H1 (cell line): ENCODE measurements at regions of chr14 and their contacts with region 1.

Region 1: DNA sequence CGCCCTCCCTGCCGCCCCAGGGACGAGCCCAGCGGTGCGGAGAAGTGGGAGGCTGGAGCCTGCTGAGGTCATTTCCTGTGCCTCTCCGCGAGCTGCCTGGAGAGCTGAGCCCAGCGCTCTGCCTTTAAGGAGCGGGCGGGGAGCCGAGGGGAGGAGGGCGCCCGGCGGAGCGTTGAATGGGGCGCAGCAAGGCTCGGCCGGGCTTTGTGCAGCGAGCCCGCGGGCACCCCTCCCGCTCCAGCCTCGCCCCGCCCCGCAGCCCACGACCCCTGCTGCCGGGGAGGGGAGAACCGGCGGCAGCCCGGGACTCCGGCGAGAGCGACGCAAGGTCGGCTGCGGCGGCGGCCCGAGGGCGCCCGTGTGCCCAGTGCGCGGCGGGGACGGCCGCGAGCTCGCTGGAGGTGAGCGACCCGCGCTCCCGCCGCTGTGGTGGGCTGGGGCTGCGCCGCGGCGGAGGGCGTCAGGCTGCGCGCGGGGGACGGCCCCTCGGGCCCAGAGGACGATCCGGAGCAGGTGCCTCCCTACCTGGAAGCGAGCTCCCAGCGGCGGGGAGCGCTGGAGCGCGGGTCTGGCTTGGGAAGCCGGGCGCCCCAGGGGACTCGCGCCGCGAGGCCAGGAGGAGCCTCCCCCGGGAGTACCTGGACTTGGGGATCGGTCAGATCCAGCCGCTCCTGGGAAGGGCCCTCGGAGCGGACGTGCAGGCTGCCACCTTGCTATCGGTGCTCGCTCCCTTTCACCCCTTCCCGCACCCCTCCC is at the start of gene PLEKHH1:
- DNase-seq: peak; percentile 63 to 84
- H3K4me3 ChIP-seq: peak within 1 kb of the TSS; percentile 57 to 82 (median 64)
- H3K27ac ChIP-seq: peak within 1 kb of the TSS; percentile 31; the same call in 1 of the 2 replicates
- H3K4me1 ChIP-seq: peaks cover 0 to 6% (median 2%) of the 10 kb centered on the region in 4 experiments; a peak in 5 of 7 replicates
- H3K27me3 ChIP-seq: no peaks in the 10 kb centered on the region
- CTCF ChIP-seq: peak in 1 of 3 experiments; percentile 3; a peak in 1 of 4 replicates
- EP300 ChIP-seq: no peak
- POLR2A ChIP-seq: peak; percentile 55 to 68
- RAD21 ChIP-seq: no peak
- total RNA-seq, gene PLEKHH1: 27.2 and 33.3 TPM in 2 replicates

Region 2: DNA sequence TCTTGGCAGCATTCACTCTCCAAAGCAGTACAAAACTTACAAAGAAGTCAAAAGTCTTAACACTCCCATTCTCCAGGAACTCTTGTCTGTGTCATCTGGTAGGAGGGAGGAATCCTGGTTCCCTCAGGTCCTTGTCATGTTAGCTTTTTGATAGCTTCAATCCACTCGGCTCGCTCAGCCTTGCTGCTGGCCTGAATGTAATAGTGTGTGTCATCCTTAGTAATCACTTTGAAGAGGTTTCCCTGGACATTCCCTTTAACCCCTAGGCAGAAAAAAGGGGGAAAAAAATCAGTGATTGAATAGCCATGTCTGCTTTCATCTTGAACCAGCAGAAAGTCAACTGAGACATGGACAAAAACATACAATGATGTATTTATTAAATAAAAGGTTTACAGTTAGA is 146.0 kb before region 1 on chr14:
- CTCF ChIA-PET with region 1: no interaction called
- POLR2A ChIA-PET with region 1: no interaction called
- DNase-seq: no peak
- H3K4me3 ChIP-seq: no peak overlapping the region
- H3K27ac ChIP-seq: no peak overlapping the region
- H3K4me1 ChIP-seq: no peaks in the 10 kb centered on the region
- H3K27me3 ChIP-seq: no peaks in the 10 kb centered on the region
- CTCF ChIP-seq: no peak
- EP300 ChIP-seq: no peak
- POLR2A ChIP-seq: no peak
- RAD21 ChIP-seq: no peak

Region 3: DNA sequence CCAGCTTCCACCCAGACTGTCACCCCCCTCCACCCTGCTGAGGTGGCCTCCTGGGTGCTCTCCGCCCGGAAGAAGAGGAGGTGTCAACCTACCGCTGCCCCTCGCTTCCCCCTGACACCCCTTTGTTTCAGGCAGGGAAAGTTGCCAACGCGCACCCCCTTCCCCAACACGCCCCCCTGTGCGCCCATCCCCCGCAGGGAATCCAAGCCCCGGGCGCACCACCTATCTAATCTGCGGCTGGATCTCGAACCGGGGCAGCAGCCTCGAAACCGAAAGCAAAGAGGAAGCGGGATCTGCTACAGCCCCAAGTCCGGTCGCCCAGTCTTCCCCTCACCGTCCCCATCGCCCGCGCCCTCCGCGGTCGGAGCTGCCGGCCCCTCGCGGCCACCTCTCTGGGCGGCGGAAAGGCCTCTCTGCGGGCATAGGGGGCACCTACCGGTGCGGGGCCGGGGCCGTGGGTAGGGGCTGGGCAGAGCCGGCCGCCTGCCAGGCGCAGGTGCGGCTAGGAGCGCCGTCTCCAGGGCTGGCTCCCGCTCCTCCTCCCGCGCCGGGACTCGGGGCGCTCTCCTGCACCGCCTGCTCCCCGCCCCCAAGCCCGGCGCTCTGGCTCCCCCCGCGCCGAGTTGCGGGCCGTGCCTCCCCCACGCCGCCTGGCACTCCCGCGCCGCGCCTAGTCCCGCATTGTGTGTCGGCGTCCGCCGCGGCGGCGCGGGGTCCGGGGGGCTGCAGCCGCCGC is 18.4 kb before region 1 on chr14:
- CTCF ChIA-PET with region 1: interaction called, 100 read pairs
- POLR2A ChIA-PET with region 1: interaction called, 29 read pairs
- DNase-seq: peak in 1 of 2 experiments; percentile 77
- H3K4me3 ChIP-seq: peak overlapping the region; percentile 42 to 85 (median 46)
- H3K27ac ChIP-seq: no peak overlapping the region
- H3K4me1 ChIP-seq: peaks cover 2 to 8% (median 3%) of the 10 kb centered on the region in 4 experiments; a peak in 4 of 7 replicates
- H3K27me3 ChIP-seq: peaks cover 7 to 49% (median 32%) of the 10 kb centered on the region in 4 experiments
- CTCF ChIP-seq: no peak
- EP300 ChIP-seq: no peak
- POLR2A ChIP-seq: no peak
- RAD21 ChIP-seq: no peak

Region 4: GRCh38 chr14:67943947-67944346 is 410.8 kb after region 1 on chr14:
- CTCF ChIA-PET with region 1: no interaction called
- POLR2A ChIA-PET with region 1: no interaction called
- DNase-seq: peak; percentile 15 to 60
- H3K4me3 ChIP-seq: no peak overlapping the region
- H3K27ac ChIP-seq: no peak overlapping the region
- H3K4me1 ChIP-seq: peaks cover 4 to 15% (median 6%) of the 10 kb centered on the region in 4 experiments; a peak in 6 of 7 replicates
- H3K27me3 ChIP-seq: no peaks in the 10 kb centered on the region
- CTCF ChIP-seq: peak in 2 of 3 experiments; percentile 65 to 70; a peak in 3 of 4 replicates
- EP300 ChIP-seq: no peak
- POLR2A ChIP-seq: no peak
- RAD21 ChIP-seq: peak; percentile 93 to 94